ENCODE measurements at regions of chr1 and their contacts with region 1.

Region 1: GRCh38 chr1:88877382-88877825 is 14.0 kb downstream of the GTF2B start:
- DNase-seq: peak in 1 of 3 donors; percentile 41
- H3K4me3 ChIP-seq: no peak overlapping the region
- H3K4me3 Mint-ChIP-seq: no peak overlapping the region
- H3K27ac ChIP-seq: peak overlapping the region in 1 of 2 donors; percentile 3
- H3K27ac Mint-ChIP-seq: peak overlapping the region in 2 of 7 donors; percentile 18
- H3K4me1 ChIP-seq: peaks cover 14 to 21% of the 10 kb centered on the region in 2 donors
- H3K4me1 Mint-ChIP-seq: peaks cover 19% of the 10 kb centered on the region
- H3K27me3 ChIP-seq: no peaks in the 10 kb centered on the region
- H3K27me3 Mint-ChIP-seq: no peaks in the 10 kb centered on the region
- CTCF ChIP-seq: peak; percentile 85

Region 2: DNA sequence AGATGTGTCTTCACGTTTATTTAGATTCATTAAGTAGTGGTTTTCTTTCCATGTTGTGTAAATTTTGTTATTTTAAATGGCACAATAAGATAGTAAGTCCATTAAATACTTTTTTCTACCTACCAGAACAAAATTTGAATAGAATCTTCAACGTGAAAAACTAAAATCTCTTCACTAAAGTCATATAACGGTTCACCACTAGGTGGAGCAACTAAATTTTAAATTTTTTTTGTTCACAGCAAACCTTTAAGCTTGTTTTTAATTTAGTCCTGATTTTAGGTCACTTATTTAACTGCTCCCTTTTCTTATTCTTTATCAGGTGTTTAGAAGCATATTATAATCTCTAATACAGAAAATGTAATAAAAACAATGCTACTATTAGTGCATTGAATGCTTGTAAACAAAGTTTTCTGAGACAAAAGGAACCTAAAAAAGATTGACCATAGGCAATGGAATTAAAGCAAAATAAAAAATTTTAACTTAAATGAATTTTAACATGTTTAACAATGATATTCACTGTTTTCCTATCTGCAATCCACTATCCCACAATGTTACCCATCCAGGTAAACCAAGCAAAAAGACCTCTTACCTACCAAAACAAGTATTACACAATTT is 221.6 kb before region 1 on chr1:
- intact Hi-C with region 1: loop called in 1 of 2 experiments (anchors 5 kb)
- DNase-seq: peak; percentile 7 to 50 (median 10)
- H3K4me3 ChIP-seq: no peak overlapping the region
- H3K4me3 Mint-ChIP-seq: no peak overlapping the region
- H3K27ac ChIP-seq: no peak overlapping the region
- H3K27ac Mint-ChIP-seq: no peak overlapping the region
- H3K4me1 ChIP-seq: no peaks in the 10 kb centered on the region
- H3K4me1 Mint-ChIP-seq: no peaks in the 10 kb centered on the region
- H3K27me3 ChIP-seq: no peaks in the 10 kb centered on the region
- H3K27me3 Mint-ChIP-seq: peaks cover 0 to 2% (median 1%) of the 10 kb centered on the region in 3 donors
- CTCF ChIP-seq: peak; percentile 83

Region 3: DNA sequence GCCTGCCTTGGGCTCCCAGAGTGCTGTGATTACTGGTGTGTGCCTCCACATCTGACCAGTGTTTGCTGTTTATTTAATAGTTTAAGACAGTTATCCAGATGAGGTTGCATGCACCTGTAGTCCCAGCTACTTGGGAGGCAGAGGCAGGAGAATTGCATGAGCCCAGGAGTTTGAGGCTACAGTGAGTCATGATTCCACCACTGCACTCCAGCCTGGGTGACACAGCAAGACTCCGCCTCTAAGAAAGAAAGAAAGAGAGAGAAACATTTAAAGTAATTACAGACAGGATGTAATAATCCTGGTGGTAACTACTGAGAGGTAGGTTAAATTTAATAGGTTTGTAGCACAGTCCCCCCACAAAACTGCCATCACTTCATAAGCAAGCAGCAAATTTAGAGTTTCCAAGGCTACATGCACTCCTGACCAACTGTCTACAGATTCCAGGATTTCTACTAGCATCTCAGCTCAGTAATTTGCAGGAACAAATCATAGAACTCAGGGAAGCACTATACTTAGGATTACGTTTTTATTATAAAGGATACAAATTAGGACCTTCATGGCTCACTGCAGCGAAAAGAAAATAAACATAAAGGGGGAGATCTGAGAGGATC is 103.8 kb before region 1 on chr1:
- intact Hi-C with region 1: no loop called
- DNase-seq: no peak
- H3K4me3 ChIP-seq: no peak overlapping the region
- H3K4me3 Mint-ChIP-seq: no peak overlapping the region
- H3K27ac ChIP-seq: no peak overlapping the region
- H3K27ac Mint-ChIP-seq: peak overlapping the region in 3 of 7 donors; percentile 4 to 64 (median 47)
- H3K4me1 ChIP-seq: no peaks in the 10 kb centered on the region
- H3K4me1 Mint-ChIP-seq: no peaks in the 10 kb centered on the region
- H3K27me3 ChIP-seq: no peaks in the 10 kb centered on the region
- H3K27me3 Mint-ChIP-seq: peaks cover 0 to 2% (median 0%) of the 10 kb centered on the region in 3 donors
- CTCF ChIP-seq: no peak

Region 4: DNA sequence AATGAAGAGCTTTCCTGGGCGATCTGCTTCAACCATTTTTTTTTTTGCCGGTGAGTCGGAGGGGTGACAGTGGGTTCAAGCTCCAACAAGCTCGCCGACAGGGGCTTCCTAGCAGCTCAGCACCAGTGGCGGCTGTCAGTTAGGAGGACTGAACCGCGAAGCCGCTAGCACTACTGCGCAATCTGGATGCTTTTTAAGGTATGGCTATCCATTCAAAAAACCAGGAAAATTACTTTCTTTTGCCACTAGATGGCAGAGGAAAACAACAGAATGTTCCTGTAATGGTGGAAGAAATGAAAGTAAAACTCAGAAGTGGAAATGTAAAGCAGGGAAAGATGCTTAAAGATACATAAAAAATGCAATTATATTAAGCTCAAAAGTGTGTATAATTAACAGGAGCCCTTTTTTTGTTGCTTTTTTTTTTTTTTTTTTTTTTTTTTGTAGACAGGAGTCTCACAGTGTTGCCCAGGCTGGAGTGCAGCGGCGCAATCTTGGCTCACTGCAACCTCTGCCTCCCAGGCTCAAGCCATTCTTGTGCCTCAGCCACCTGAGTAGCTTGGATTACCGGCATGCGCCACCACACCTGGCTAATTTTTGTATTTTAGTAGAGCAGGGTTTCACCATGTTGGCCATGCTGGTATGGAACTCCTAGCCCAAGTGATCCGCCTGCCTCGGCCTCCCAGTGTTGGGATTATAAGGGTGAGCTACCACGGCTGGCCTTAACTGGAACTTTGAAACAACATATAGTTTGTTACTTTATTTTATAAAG is 106.6 kb after region 1 on chr1:
- intact Hi-C with region 1: no loop called
- DNase-seq: peak; percentile 52 to 75 (median 64)
- H3K4me3 ChIP-seq: peak overlapping the region in 1 of 3 experiments; percentile 34
- H3K4me3 Mint-ChIP-seq: peak overlapping the region; percentile 35 to 40
- H3K27ac ChIP-seq: peak overlapping the region; percentile 27 to 29
- H3K27ac Mint-ChIP-seq: peak overlapping the region in 6 of 7 donors; percentile 18 to 81 (median 70)
- H3K4me1 ChIP-seq: peaks cover 11 to 14% of the 10 kb centered on the region in 2 donors
- H3K4me1 Mint-ChIP-seq: peaks cover 24% of the 10 kb centered on the region
- H3K27me3 ChIP-seq: no peaks in the 10 kb centered on the region
- H3K27me3 Mint-ChIP-seq: no peaks in the 10 kb centered on the region
- CTCF ChIP-seq: peak; percentile 80